ENCODE measurements at regions of chr3 and their contacts with region 1.

Region 1: GRCh38 chr3:20104167-20104661 is 64.0 kb downstream of the KAT2B start:
- DNase-seq: peak; percentile 62
- H3K4me3 Mint-ChIP-seq: peak overlapping the region; percentile 57
- H3K27ac Mint-ChIP-seq: peak overlapping the region; percentile 89
- H3K4me1 Mint-ChIP-seq: peaks cover 70% of the 10 kb centered on the region
- H3K27me3 Mint-ChIP-seq: no peaks in the 10 kb centered on the region

Region 2: GRCh38 chr3:19946832-19947548 is 157.2 kb before region 1 on chr3 and contains the start of gene RAB5A:
- CTCF ChIA-PET with region 1: no interaction called
- POLR2A ChIA-PET with region 1: no interaction called
- intact Hi-C with region 1: loop called (anchors 5 kb)
- DNase-seq: peak; percentile 98
- H3K4me3 Mint-ChIP-seq: peak within 1 kb of the TSS; percentile 93
- H3K27ac Mint-ChIP-seq: peak within 1 kb of the TSS; percentile 99
- H3K4me1 Mint-ChIP-seq: peaks cover 44% of the 10 kb centered on the region
- H3K27me3 Mint-ChIP-seq: no peaks in the 10 kb centered on the region
- total RNA-seq, gene RAB5A: 55.6 to 65.3 TPM

Region 3: DNA sequence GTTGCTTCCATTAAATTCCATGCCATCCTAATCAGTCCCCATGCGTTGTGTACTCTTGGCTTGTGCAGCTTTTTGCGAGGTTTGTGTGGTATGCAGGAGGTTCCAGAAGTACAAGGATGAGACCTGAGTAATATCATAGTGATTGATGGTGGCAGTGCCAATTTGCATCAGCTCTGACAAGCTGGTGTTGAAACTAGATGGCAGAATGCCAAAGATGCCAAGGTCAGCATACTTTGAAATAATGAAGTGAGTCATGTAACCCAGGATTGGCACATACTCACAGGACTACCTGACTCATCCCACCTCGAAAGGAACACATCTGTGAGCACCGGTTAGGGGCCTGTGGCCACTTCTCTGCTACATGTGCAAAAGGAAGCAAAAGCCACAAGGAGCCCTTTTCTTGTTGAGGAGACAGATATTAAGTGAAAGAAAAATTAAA is 49.6 kb before region 1 on chr3:
- CTCF ChIA-PET with region 1: no interaction called
- POLR2A ChIA-PET with region 1: interaction called, 11 read pairs
- intact Hi-C with region 1: loop called (anchors 1 kb)
- DNase-seq: peak; percentile 88
- H3K4me3 Mint-ChIP-seq: no peak overlapping the region
- H3K27ac Mint-ChIP-seq: no peak overlapping the region
- H3K4me1 Mint-ChIP-seq: peaks cover 39% of the 10 kb centered on the region
- H3K27me3 Mint-ChIP-seq: no peaks in the 10 kb centered on the region

Region 4: GRCh38 chr3:20066848-20067617 is 37.2 kb before region 1 on chr3:
- CTCF ChIA-PET with region 1: no interaction called
- POLR2A ChIA-PET with region 1: no interaction called
- intact Hi-C with region 1: no loop called
- DNase-seq: no peak
- H3K4me3 Mint-ChIP-seq: no peak overlapping the region
- H3K27ac Mint-ChIP-seq: no peak overlapping the region
- H3K4me1 Mint-ChIP-seq: peaks cover 53% of the 10 kb centered on the region
- H3K27me3 Mint-ChIP-seq: no peaks in the 10 kb centered on the region

Region 5: GRCh38 chr3:20091331-20091730 is 12.9 kb before region 1 on chr3:
- CTCF ChIA-PET with region 1: interaction called, 3 read pairs
- POLR2A ChIA-PET with region 1: no interaction called
- intact Hi-C with region 1: loop called (anchors 1 kb)
- DNase-seq: no peak
- H3K4me3 Mint-ChIP-seq: no peak overlapping the region
- H3K27ac Mint-ChIP-seq: no peak overlapping the region
- H3K4me1 Mint-ChIP-seq: peaks cover 12% of the 10 kb centered on the region
- H3K27me3 Mint-ChIP-seq: no peaks in the 10 kb centered on the region